K562 (cell line): ENCODE measurements at regions of chr15 and their contacts with region 1.

Region 1: GRCh38 chr15:64905119-64905831 is 6.4 kb upstream of the ANKDD1A start:
- DNase-seq: peak; percentile 75 to 81 (median 76)
- ATAC-seq: peak; percentile 99
- H3K4me3 ChIP-seq: no peak overlapping the region
- H3K27ac ChIP-seq: no peak overlapping the region
- H3K4me1 ChIP-seq: peaks cover 0 to 5% of the 10 kb centered on the region in 2 experiments; a peak in 2 of 5 replicates
- H3K27me3 ChIP-seq: peaks cover 0 to 16% of the 10 kb centered on the region in 2 experiments; a peak in 2 of 5 replicates
- CTCF ChIP-seq: peak; percentile 76 to 89 (median 85)
- EP300 ChIP-seq: no peak
- POLR2A ChIP-seq: no peak
- RAD21 ChIP-seq: peak; percentile 58 to 85; a peak in 3 of 4 replicates

Region 2: DNA sequence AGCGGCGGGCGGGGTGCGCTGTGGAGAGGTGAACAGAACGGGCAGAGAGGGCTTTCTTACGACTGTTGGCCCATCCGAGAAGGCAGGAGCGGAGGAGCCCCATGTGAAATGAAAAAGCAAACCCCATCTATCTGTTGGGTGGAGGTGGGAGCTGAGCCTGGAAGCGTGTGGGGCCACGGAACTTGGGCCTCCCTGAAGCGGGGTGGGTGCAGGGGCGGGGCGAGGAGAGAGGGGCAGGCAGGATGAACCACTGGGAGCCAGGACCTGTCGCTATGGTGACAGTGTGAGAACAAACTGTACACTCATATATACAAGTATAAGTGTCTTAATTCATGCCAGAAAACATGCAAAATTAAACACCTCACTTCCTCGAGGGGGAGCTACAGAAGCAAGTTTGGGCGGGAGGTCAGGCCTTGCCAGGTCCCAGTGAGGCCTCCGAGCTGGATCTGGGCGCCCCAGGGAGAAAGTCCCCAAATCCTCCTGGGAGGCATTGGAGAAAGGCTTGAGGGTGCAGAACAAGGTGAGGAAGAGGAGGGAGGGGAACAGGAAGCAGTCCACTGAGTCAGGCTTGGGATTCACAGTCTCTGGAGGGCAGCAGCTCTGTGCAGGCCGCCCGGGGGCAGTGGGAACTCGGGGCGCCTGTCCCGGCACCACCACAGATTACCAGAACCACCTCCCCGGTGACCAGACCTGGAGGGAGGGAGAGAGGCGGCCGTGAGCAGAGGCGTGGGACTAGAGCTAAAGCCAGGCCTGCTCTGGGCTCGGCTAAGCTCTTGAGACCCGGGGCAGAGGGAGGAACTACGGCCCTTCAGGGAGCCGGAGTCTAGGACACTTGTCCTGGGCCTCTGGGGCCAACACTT is 164.7 kb before region 1 on chr15:
- CTCF ChIA-PET with region 1: interaction called, 6 read pairs
- POLR2A ChIA-PET with region 1: no interaction called
- in situ Hi-C with region 1: no loop called
- intact Hi-C with region 1: loop called (anchors 5 kb)
- DNase-seq: peak; percentile 42 to 55 (median 49)
- ATAC-seq: peak; percentile 80
- H3K4me3 ChIP-seq: no peak overlapping the region
- H3K27ac ChIP-seq: no peak overlapping the region
- H3K4me1 ChIP-seq: peaks cover 0 to 3% of the 10 kb centered on the region in 2 experiments; a peak in 1 of 5 replicates
- H3K27me3 ChIP-seq: peaks cover 25 to 74% of the 10 kb centered on the region in 2 experiments; a peak in 4 of 5 replicates
- CTCF ChIP-seq: peak; percentile 56 to 68 (median 59)
- EP300 ChIP-seq: no peak
- POLR2A ChIP-seq: no peak
- RAD21 ChIP-seq: peak; percentile 29 to 60; a peak in 3 of 4 replicates

Region 3: DNA sequence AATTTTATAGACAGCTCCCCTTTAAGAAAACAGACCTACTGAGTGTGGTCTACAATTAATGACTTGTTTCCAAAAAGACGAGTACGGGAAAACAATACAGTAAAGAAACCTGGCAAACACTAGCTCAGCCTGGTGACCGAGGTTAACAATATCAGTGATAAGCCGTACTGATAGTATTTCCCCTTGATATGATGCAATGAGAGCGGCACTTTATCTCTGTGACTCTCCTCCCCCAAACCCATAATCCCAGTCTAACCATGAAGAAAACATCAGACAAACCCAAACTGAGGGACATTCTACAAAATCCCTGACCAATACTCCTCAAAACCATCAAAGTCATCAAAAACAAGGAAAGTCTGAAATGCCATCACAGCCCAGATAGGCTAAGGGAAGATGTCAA is 878.6 kb after region 1 on chr15:
- CTCF ChIA-PET with region 1: no interaction called
- POLR2A ChIA-PET with region 1: no interaction called
- in situ Hi-C with region 1: no loop called
- intact Hi-C with region 1: no loop called
- DNase-seq: peak in 1 of 4 experiments; percentile 40
- ATAC-seq: peak; percentile 44
- H3K4me3 ChIP-seq: no peak overlapping the region
- H3K27ac ChIP-seq: 0 out of 3 replicates have a peak overlapping the region, but pooled peaks have one; percentile 15
- H3K4me1 ChIP-seq: peaks cover 8 to 31% of the 10 kb centered on the region in 2 experiments; a peak in 4 of 5 replicates
- H3K27me3 ChIP-seq: no peaks in the 10 kb centered on the region
- CTCF ChIP-seq: no peak
- EP300 ChIP-seq: peak; percentile 81
- POLR2A ChIP-seq: no peak
- RAD21 ChIP-seq: 0 out of 4 replicates have a peak, but pooled peaks have one; percentile 9 to 17